CD8-positive, alpha-beta T cell (primary cell): ENCODE measurements at regions of chr4 and their contacts with region 1.

Region 1: DNA sequence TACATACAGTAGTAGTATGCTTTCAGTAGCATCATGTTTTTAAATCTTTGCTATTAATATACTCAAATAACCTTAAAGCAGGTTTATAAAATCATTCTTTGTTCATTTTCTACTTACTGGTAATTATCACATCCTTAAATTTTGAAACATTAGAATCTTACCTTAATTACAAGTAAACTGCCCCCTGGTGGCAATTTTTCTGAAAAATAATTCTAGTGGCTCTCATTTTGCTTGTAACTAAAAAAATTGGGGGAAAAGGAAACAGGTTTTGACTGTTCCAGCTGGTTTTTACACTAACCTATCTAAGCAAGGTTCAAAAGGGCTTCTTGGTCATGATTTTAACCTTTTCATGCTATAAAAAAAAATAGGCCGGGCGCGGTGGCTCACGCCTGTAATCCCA is 18.5 kb upstream of the DCAF4L1 start:
- DNase-seq: peak in 3 of 9 experiments; percentile 13 to 39 (median 27)
- ATAC-seq: no peak
- H3K4me3 ChIP-seq: no peak overlapping the region
- H3K4me3 Mint-ChIP-seq: no peak overlapping the region
- H3K27ac ChIP-seq: no peak overlapping the region
- H3K27ac Mint-ChIP-seq: no peak overlapping the region
- H3K4me1 ChIP-seq: no peaks in the 10 kb centered on the region
- H3K4me1 Mint-ChIP-seq: no peaks in the 10 kb centered on the region
- H3K27me3 ChIP-seq: no peaks in the 10 kb centered on the region
- H3K27me3 Mint-ChIP-seq: no peaks in the 10 kb centered on the region
- CTCF ChIP-seq: peak; percentile 39

Region 2: DNA sequence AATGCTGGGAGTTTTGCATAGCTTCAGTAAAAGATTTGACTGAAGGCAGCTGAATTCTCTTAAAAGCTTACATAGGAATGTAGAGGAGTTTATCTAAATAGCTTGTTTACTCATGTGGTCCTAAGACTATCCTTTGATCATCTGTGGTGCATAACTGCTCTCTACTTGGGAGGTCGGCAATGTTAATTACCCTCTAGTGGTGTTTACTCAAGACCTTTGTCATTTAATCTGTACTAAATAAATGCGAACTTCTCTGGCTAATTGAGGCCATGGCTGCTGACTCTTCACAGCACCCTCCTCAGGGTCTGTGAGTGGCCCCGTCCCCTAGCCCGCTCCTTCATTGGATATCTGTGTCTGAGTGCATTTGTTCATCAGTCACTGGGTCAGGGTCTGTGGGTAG is 41.6 kb before region 1 on chr4:
- CTCF ChIA-PET with region 1: no interaction called
- POLR2A ChIA-PET with region 1: no interaction called
- intact Hi-C with region 1: no loop called
- DNase-seq: no peak
- ATAC-seq: no peak
- H3K4me3 ChIP-seq: no peak overlapping the region
- H3K4me3 Mint-ChIP-seq: no peak overlapping the region
- H3K27ac ChIP-seq: no peak overlapping the region
- H3K27ac Mint-ChIP-seq: no peak overlapping the region
- H3K4me1 ChIP-seq: no peaks in the 10 kb centered on the region
- H3K4me1 Mint-ChIP-seq: no peaks in the 10 kb centered on the region
- H3K27me3 ChIP-seq: no peaks in the 10 kb centered on the region
- H3K27me3 Mint-ChIP-seq: peaks cover 20% of the 10 kb centered on the region
- CTCF ChIP-seq: no peak

Region 3: GRCh38 chr4:41998019-41998418 is 34.9 kb after region 1 on chr4:
- CTCF ChIA-PET with region 1: no interaction called
- POLR2A ChIA-PET with region 1: no interaction called
- intact Hi-C with region 1: loop called in 1 of 2 experiments (anchors 5 kb)
- DNase-seq: no peak
- ATAC-seq: no peak
- H3K4me3 ChIP-seq: no peak overlapping the region
- H3K4me3 Mint-ChIP-seq: no peak overlapping the region
- H3K27ac ChIP-seq: no peak overlapping the region
- H3K27ac Mint-ChIP-seq: no peak overlapping the region
- H3K4me1 ChIP-seq: no peaks in the 10 kb centered on the region
- H3K4me1 Mint-ChIP-seq: peaks cover 40% of the 10 kb centered on the region
- H3K27me3 ChIP-seq: no peaks in the 10 kb centered on the region
- H3K27me3 Mint-ChIP-seq: no peaks in the 10 kb centered on the region
- CTCF ChIP-seq: no peak